ENCODE measurements at regions of chr11 and their contacts with region 1.

Region 1: GRCh38 chr11:19259487-19260345 is 19.0 kb upstream of the E2F8 start:
- DNase-seq: peak; percentile 59 to 73 (median 68)
- ATAC-seq: peak; percentile 90
- H3K4me3 ChIP-seq: no peak overlapping the region
- H3K27ac ChIP-seq: no peak overlapping the region
- H3K4me1 ChIP-seq: no peaks in the 10 kb centered on the region
- H3K27me3 ChIP-seq: peaks cover 8 to 12% of the 10 kb centered on the region in 2 experiments; a peak in 4 of 5 replicates
- CTCF ChIP-seq: peak; percentile 76 to 88 (median 84)
- EP300 ChIP-seq: no peak
- POLR2A ChIP-seq: no peak
- RAD21 ChIP-seq: peak; percentile 59 to 74

Region 2: GRCh38 chr11:19076744-19077589 is 182.7 kb before region 1 on chr11:
- CTCF ChIA-PET with region 1: interaction called, 8 read pairs
- POLR2A ChIA-PET with region 1: no interaction called
- in situ Hi-C with region 1: no loop called
- intact Hi-C with region 1: loop called (anchors 2 kb)
- DNase-seq: peak; percentile 62 to 76 (median 70)
- ATAC-seq: peak; percentile 88
- H3K4me3 ChIP-seq: no peak overlapping the region
- H3K27ac ChIP-seq: no peak overlapping the region
- H3K4me1 ChIP-seq: no peaks in the 10 kb centered on the region; a peak in 1 of 5 replicates
- H3K27me3 ChIP-seq: 0 out of 5 replicates have a peak, but pooled peaks cover 0 to 3% of the 10 kb centered on the region in 2 experiments
- CTCF ChIP-seq: peak; percentile 72 to 95 (median 80)
- EP300 ChIP-seq: no peak
- POLR2A ChIP-seq: no peak
- RAD21 ChIP-seq: peak; percentile 49 to 69

Region 3: DNA sequence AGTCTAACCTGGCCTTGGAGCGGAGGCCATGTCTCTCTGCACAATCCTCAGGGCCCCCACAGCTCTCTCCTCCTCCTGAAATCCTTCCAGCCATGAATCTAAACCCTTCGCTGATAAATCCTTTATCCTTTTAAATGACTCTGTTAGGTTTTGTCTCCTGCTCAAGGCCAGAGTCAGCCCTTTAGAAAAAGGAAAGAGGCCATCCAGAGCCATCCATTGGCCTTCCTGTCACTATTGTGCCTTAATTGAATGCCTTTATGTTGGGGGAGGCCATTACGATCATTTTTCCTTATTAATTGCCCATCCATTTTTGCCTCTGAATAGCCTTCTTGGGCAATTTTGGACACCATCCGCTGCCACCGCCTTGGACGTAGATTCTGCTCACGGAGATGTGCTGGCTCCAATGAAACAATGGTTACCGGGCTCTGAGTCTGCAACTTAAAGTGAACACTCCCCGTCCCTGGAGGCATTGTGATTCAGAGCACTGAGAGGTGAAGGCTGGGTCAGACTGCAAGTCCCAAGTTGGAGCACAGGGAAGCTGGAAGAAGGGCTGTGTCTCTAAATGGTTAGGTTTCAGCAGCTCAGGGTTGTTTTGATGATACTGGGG is 194.0 kb after region 1 on chr11:
- CTCF ChIA-PET with region 1: no interaction called
- POLR2A ChIA-PET with region 1: no interaction called
- in situ Hi-C with region 1: no loop called
- intact Hi-C with region 1: no loop called
- DNase-seq: no peak
- ATAC-seq: no peak
- H3K4me3 ChIP-seq: no peak overlapping the region
- H3K27ac ChIP-seq: no peak overlapping the region
- H3K4me1 ChIP-seq: no peaks in the 10 kb centered on the region; a peak in 1 of 5 replicates
- H3K27me3 ChIP-seq: peaks cover 6 to 21% of the 10 kb centered on the region in 2 experiments
- CTCF ChIP-seq: no peak
- EP300 ChIP-seq: no peak
- POLR2A ChIP-seq: no peak
- RAD21 ChIP-seq: no peak